Activated CD4-positive, alpha-beta T cell treated with anti-CD3 and anti-CD28 coated beads, Interleukin-2, amount 10 ng/mL, durations not matched to agents 24 days and 14 days (primary cell): ENCODE measurements at regions of chr13 and their contacts with region 1.

Region 1: GRCh38 chr13:110520431-110521295 is 40.9 kb downstream of the RAB20 start:
- DNase-seq: no peak
- H3K4me3 Mint-ChIP-seq: no peak overlapping the region
- H3K27ac Mint-ChIP-seq: no peak overlapping the region
- H3K4me1 Mint-ChIP-seq: peaks cover 16% of the 10 kb centered on the region
- H3K27me3 Mint-ChIP-seq: no peaks in the 10 kb centered on the region

Region 2: GRCh38 chr13:110784704-110785103 is 264.0 kb after region 1 on chr13:
- intact Hi-C with region 1: loop called (anchors 5 kb)
- DNase-seq: no peak
- H3K4me3 Mint-ChIP-seq: no peak overlapping the region
- H3K27ac Mint-ChIP-seq: no peak overlapping the region
- H3K4me1 Mint-ChIP-seq: no peaks in the 10 kb centered on the region
- H3K27me3 Mint-ChIP-seq: peaks cover 15% of the 10 kb centered on the region